ENCODE measurements at regions of chrX and their contacts with region 1.

Region 1: DNA sequence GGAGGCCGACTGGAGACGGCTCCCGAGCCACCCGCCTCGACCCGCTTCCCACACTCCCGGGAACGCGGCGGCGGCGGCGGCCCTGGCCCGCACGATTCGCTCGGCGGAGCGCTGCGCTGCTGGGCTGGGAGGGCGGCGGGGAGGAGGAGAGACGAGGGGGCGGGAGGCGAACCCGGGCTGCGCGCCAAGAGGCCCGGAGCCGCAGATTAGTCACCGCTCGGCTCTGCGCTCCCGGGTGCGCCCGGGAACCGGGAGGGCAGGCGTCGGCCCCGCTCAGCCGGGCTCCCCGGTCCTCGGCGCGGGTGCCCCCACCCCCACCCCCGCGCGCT is 11.2 kb upstream of the BCOR start:
- DNase-seq: peak; percentile 89
- ATAC-seq: peak; percentile 69
- H3K4me3 ChIP-seq: peak overlapping the region; percentile 49
- H3K27ac ChIP-seq: peak overlapping the region; percentile 74
- H3K4me1 ChIP-seq: peaks cover 12% of the 10 kb centered on the region
- H3K27me3 ChIP-seq: no peaks in the 10 kb centered on the region
- CTCF ChIP-seq: no peak

Region 2: DNA sequence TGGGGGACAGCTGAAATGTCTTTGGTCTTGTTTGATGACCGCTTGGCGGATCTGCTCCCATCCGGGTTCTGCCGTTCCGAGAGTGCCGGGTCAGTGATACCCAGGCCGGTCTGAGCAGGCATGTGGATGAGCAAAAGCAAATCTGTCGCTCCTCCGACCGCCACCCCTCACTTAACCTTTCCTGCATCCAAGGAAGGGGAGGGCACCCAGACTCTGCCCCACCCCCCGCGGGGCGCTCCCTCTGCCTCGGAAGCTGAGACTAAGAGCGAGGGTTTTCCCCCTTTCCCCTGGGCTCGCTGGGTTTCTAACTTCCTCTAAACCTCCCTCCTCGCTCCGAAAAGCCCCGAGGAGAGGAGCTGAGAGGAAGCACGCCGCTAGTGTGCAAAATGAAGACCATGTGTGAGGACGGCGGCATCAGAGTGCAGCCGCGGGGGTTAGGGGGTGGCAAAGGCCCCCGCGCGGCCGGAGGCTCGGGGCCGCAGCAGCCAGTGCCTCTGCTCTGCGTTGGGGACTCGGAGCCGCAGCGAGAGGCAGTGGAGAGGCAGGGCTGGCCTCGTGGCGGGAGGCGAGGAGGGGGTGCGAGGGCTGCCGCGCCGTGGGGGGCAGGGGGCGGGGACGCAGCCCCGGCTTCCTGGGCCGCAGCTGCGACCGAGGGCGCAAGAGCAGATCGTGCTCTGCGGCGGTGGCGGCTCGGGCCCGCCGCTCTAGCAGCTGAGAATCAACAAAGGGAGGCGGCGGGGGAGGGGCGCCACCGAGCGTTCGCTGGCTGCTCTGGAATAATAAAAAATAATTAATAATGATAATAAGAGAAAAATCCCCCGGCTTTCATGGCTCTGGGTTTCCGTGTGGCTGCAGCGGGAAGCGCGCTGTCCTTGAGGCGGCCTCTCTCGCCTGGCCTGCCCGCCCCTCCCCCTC is 44.7 kb after region 1 on chrX:
- intact Hi-C with region 1: loop called (anchors 10 kb)
- DNase-seq: peak; percentile 76
- ATAC-seq: peak; percentile 10
- H3K4me3 ChIP-seq: peak overlapping the region; percentile 45
- H3K27ac ChIP-seq: peak overlapping the region; percentile 36
- H3K4me1 ChIP-seq: peaks cover 4% of the 10 kb centered on the region
- H3K27me3 ChIP-seq: no peaks in the 10 kb centered on the region
- CTCF ChIP-seq: no peak

Measured in upper lobe of right lung (tissue), 1 donor.